Activated CD4-positive, alpha-beta memory T cell treated with anti-CD3 and anti-CD28 coated beads for 36 hours (primary cell): ENCODE measurements at regions of chr3 and their contacts with region 1.

Region 1: GRCh38 chr3:56494686-56495322 is 26.5 kb upstream of the ERC2 start:
- DNase-seq: peak; percentile 76
- H3K4me3 Mint-ChIP-seq: no peak overlapping the region
- H3K27ac Mint-ChIP-seq: no peak overlapping the region
- H3K4me1 Mint-ChIP-seq: no peaks in the 10 kb centered on the region
- H3K27me3 Mint-ChIP-seq: peaks cover 18% of the 10 kb centered on the region

Region 2: DNA sequence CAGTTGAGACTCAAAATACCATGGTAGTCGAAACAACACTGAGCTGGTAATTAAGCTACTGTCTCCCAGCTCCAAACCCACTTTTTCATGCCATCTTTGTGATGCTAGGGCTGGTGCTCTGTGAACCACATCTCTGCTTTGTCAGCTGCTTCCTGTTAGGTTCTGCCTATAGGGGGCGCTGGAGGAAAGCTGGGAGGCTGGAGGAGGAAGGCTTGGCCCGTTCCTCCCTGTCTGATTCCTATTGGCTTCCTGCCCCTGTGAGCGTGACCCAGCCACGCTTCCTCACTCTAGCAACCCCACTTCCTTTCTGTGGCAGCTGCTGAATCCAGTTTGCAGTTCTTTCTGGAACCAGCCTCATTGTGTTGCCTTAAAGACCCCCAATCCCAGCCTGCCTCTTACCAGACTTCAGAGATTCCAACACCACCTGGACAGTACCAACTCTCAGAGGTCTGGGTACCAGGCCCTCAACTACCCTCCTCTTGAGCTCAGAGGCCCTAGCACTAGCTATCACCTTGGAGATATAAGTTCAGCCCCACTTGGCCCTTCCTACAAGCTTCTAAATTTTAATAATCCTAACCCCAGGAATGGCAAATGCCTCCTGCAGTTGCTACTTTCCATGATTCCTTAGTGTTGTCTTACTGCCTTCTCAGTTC is 147.5 kb before region 1 on chr3:
- CTCF ChIA-PET with region 1: interaction called, 4 read pairs
- POLR2A ChIA-PET with region 1: no interaction called
- intact Hi-C with region 1: loop called (anchors 2 kb)
- DNase-seq: peak; percentile 54
- H3K4me3 Mint-ChIP-seq: no peak overlapping the region
- H3K27ac Mint-ChIP-seq: no peak overlapping the region
- H3K4me1 Mint-ChIP-seq: no peaks in the 10 kb centered on the region
- H3K27me3 Mint-ChIP-seq: no peaks in the 10 kb centered on the region

Region 3: DNA sequence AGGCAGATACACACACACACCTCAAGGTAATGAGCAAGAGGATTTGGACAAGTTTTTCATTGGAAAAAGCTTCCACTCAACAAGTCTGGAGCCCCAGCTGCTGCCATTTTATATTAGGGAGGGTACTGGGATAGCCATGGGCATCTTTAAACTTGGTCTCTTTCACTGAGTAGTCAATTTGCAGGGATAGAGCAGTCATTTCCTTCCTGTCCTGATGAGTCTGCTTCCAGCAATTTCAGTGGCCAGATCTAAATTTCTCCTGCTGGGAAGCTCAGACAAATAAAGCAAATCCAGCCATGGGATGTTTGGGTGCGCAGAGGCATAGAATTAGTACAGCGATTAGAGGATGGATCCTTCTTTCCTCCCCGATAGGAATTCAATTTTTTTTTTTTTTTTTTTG is 25.7 kb before region 1 on chr3:
- CTCF ChIA-PET with region 1: interaction called, 10 read pairs
- POLR2A ChIA-PET with region 1: no interaction called
- intact Hi-C with region 1: no loop called
- DNase-seq: no peak
- H3K4me3 Mint-ChIP-seq: peak overlapping the region; percentile 12
- H3K27ac Mint-ChIP-seq: no peak overlapping the region
- H3K4me1 Mint-ChIP-seq: peaks cover 7% of the 10 kb centered on the region
- H3K27me3 Mint-ChIP-seq: peaks cover 52% of the 10 kb centered on the region